A673 (cell line): ENCODE measurements at regions of chr9 and their contacts with region 1.

Region 1: GRCh38 chr9:136051517-136052432 is 43.3 kb downstream of the NACC2 start:
- DNase-seq: peak; percentile 96
- H3K4me3 ChIP-seq: peak overlapping the region; percentile 96
- H3K27ac ChIP-seq: peak overlapping the region; percentile 97
- H3K4me1 ChIP-seq: peaks cover 83% of the 10 kb centered on the region
- H3K27me3 ChIP-seq: no peaks in the 10 kb centered on the region
- CTCF ChIP-seq: no peak

Region 2: GRCh38 chr9:135440620-135441019 is 611.2 kb before region 1 on chr9:
- CTCF ChIA-PET with region 1: no interaction called
- POLR2A ChIA-PET with region 1: no interaction called
- intact Hi-C with region 1: no loop called
- DNase-seq: no peak
- H3K4me3 ChIP-seq: no peak overlapping the region
- H3K27ac ChIP-seq: no peak overlapping the region
- H3K4me1 ChIP-seq: no peaks in the 10 kb centered on the region
- H3K27me3 ChIP-seq: no peaks in the 10 kb centered on the region
- CTCF ChIP-seq: no peak

Region 3: GRCh38 chr9:135971892-135972291 is 79.9 kb before region 1 on chr9:
- CTCF ChIA-PET with region 1: no interaction called
- POLR2A ChIA-PET with region 1: no interaction called
- intact Hi-C with region 1: loop called (anchors 5 kb)
- DNase-seq: no peak
- H3K4me3 ChIP-seq: no peak overlapping the region
- H3K27ac ChIP-seq: peak overlapping the region; percentile 98
- H3K4me1 ChIP-seq: peaks cover 71% of the 10 kb centered on the region
- H3K27me3 ChIP-seq: no peaks in the 10 kb centered on the region
- CTCF ChIP-seq: no peak